Ascending aorta (tissue), 2 donors: ENCODE measurements at regions of chr13 and their contacts with region 1.

Region 1: DNA sequence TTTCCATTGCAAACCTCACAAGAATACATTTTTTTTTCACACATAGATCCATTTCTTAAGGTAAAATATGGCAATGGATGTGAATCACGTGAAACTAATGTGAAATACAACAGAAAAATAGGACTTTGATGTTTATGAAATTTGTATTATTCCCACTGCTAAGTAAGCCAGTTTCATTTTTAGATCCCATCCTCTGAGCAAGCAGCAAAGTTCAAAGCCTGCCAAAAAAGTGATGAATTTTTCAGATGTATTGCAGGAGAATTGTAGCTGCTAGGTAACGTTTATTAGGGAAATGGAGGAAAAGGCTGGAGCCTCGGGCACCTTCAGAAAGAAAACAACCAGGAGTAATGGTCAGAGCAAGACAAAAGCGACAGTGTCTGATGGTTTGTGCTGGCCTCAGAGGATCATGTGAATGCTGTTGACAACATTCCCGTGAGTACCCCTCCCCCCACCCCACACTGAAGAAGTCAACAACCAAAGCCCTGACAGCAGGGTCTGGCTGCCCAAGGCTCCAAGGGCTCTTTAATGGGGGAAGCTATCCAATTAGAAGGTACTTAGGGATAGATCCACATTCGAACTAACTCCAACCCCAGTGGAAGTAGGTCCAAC is 95.5 kb downstream of the OXGR1 start:
- DNase-seq: no peak
- H3K4me3 ChIP-seq: no peak overlapping the region
- H3K27ac ChIP-seq: no peak overlapping the region
- H3K4me1 ChIP-seq: no peaks in the 10 kb centered on the region
- H3K27me3 ChIP-seq: peaks cover 3% of the 10 kb centered on the region
- CTCF ChIP-seq: no peak

Region 2: DNA sequence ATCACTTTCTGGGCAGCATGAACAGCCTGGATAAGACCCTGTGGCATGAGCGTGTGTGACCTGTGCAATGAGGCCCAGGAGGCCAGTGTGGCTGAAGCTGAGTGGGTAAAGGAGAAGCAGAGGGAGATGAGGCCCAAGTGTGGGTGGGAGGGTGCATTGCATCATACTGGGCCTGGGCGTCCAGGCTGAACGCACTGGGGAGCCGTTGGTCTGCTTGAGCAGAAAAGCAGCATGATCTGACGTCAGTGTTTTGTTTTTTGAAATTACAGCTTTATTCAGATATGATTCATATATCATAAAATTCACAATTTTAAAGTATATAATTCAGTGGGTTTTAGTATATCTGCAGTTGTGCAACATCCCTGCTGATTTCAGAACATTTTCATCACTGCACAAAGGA is 399.1 kb before region 1 on chr13:
- intact Hi-C with region 1: no loop called
- DNase-seq: no peak
- H3K4me3 ChIP-seq: no peak overlapping the region
- H3K27ac ChIP-seq: no peak overlapping the region
- H3K4me1 ChIP-seq: no peaks in the 10 kb centered on the region
- H3K27me3 ChIP-seq: no peaks in the 10 kb centered on the region
- CTCF ChIP-seq: no peak

Region 3: GRCh38 chr13:96822895-96823294 is 75.9 kb before region 1 on chr13:
- intact Hi-C with region 1: loop called (anchors 5 kb)
- DNase-seq: no peak
- H3K4me3 ChIP-seq: no peak overlapping the region
- H3K27ac ChIP-seq: no peak overlapping the region
- H3K4me1 ChIP-seq: peaks cover 0 to 15% of the 10 kb centered on the region in 2 donors
- H3K27me3 ChIP-seq: no peaks in the 10 kb centered on the region
- CTCF ChIP-seq: peak in 1 of 3 experiments; percentile 12